Naive thymus-derived CD8-positive, alpha-beta T cell (primary cell): ENCODE measurements at regions of chr11 and their contacts with region 1.

Region 1: GRCh38 chr11:112280268-112281126 is 19.8 kb upstream of the PLET1 start:
- DNase-seq: peak; percentile 17 to 85 (median 69)
- ATAC-seq: peak; percentile 91 to 95
- H3K4me3 Mint-ChIP-seq: peak overlapping the region; percentile 89 to 97 (median 94)
- H3K27ac Mint-ChIP-seq: peak overlapping the region; percentile 37 to 92 (median 82)
- H3K4me1 Mint-ChIP-seq: peaks cover 7 to 20% (median 11%) of the 10 kb centered on the region in 4 donors
- H3K27me3 Mint-ChIP-seq: no peaks in the 10 kb centered on the region

Region 2: DNA sequence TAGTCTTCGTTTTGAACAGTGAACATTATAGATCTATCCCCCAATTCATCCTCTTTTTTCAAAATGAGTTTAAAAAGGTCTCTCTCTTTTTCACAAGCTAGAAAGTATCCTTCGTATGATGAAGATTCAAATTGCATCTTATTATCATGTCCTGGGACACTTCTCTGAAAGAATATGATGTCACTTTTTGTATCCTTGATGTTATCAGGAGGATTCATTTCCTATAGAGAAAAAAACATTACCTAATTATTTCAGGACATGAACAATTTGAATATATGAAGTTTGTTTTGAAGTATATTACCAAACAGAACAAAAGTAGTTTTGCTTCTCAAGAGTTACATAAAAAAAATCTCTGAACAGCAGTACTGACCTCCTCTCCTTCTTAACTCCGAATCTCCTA is 136.9 kb before region 1 on chr11:
- POLR2A ChIA-PET with region 1: no interaction called
- DNase-seq: no peak
- ATAC-seq: no peak
- H3K4me3 Mint-ChIP-seq: no peak overlapping the region
- H3K27ac Mint-ChIP-seq: no peak overlapping the region
- H3K4me1 Mint-ChIP-seq: no peaks in the 10 kb centered on the region
- H3K27me3 Mint-ChIP-seq: no peaks in the 10 kb centered on the region

Region 3: DNA sequence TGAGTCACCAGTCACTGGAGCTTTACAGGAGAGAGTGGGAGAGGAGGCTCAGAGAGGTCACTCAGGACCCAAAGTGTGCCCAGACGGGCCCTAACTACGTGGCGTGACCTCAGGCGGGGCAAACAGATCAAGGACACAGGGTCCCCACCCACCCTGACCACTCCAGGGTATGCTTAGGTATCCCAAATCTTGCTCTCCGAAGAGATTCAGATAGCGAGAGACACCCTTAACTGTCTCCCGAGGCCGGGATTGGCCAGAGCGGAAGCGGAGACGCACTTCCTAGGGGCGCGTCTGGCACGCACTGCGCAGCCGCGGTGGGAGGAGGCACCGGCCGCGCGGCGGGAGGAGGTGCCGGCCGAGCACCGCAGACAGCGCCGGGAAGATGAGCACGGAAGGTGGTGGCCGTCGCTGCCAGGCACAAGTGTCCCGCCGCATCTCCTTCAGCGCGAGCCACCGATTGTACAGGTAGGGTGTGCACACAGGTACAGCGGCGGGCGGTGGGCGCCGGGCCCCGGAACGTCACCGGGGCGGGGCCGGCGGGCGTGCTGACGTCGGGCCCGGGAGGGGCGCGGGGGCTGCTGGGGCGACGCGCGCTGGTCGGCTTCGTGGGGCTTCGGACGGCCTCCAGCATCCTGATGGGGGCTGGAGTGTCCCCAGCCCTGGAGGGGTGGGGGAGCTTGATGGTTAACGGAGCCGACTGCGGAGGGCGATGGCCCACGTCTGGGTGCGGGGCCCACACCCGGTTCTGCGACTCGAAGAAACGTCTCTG is 54.3 kb before region 1 on chr11 and contains the start of gene PTS:
- POLR2A ChIA-PET with region 1: interaction called, 16 read pairs
- DNase-seq: peak; percentile 72 to 91 (median 82)
- ATAC-seq: peak; percentile 88 to 90
- H3K4me3 Mint-ChIP-seq: peak within 1 kb of the TSS; percentile 85 to 95 (median 92)
- H3K27ac Mint-ChIP-seq: peak within 1 kb of the TSS; percentile 94 to 99 (median 98)
- H3K4me1 Mint-ChIP-seq: peaks cover 8 to 32% (median 29%) of the 10 kb centered on the region in 4 donors
- H3K27me3 Mint-ChIP-seq: no peaks in the 10 kb centered on the region
- polyA plus RNA-seq, gene PTS: 4.6 to 7.6 (median 5.3) TPM